ENCODE measurements at regions of chr19 and their contacts with region 1.

Region 1: GRCh38 chr19:35710784-35711723 is 6.7 kb downstream of the ZBTB32 start:
- DNase-seq: peak; percentile 87
- H3K4me3 Mint-ChIP-seq: peak overlapping the region; percentile 54
- H3K27ac Mint-ChIP-seq: peak overlapping the region; percentile 99
- H3K4me1 Mint-ChIP-seq: peaks cover 49% of the 10 kb centered on the region
- H3K27me3 Mint-ChIP-seq: no peaks in the 10 kb centered on the region

Region 2: GRCh38 chr19:35436477-35437405 is 274.3 kb before region 1 on chr19:
- CTCF ChIA-PET with region 1: no interaction called
- POLR2A ChIA-PET with region 1: no interaction called
- intact Hi-C with region 1: no loop called
- DNase-seq: peak; percentile 51
- H3K4me3 Mint-ChIP-seq: peak overlapping the region; percentile 1
- H3K27ac Mint-ChIP-seq: no peak overlapping the region
- H3K4me1 Mint-ChIP-seq: peaks cover 18% of the 10 kb centered on the region
- H3K27me3 Mint-ChIP-seq: peaks cover 13% of the 10 kb centered on the region

Region 3: DNA sequence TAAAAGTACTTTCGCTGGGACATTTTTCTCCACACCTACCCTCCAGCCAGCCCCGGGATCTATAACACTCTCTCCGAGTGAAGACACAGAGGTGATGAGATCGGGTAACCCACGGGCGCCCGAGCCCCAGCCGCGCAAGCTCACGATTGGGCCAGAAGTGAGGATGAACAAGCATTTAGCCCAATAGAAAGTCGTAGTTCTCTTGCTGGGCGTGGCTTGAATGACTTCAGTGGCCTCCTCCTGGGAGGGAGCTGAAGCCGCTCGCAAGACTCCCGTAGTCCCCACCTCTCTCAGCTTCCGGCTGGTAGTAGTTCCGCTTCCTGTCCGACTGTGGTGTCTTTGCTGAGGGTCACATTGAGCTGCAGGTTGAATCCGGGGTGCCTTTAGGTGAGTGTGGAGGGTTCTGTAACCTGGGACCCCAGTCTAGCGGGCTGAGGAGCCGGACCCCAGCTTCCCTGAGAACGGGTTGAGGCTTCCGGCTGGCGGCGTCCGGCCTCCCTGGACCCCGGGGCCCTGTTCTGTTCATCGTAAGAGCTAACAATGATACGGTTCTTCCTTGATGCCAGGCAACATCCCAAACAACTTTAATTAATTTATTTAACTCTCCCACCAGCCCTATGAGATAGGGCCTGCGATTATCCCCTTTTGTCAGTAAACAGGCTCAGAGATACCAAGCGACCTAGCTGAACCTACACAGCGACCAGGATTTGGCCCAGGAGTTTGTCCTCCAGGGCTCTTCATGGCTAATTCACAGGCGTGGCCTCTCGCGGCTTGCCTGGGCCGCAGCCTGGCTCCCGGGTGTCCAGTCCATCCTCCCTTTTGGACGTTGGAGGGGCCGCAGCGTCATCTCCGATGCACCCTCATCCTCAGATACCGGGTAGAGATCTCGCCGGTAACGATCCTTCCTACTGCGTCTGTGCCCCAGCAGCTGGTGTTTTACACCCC is 62.8 kb before region 1 on chr19 and contains the start of gene COX6B1:
- CTCF ChIA-PET with region 1: interaction called, 5 read pairs
- POLR2A ChIA-PET with region 1: interaction called, 3 read pairs
- intact Hi-C with region 1: loop called (anchors 1 kb)
- DNase-seq: peak; percentile 96
- H3K4me3 Mint-ChIP-seq: peak within 1 kb of the TSS; percentile 97
- H3K27ac Mint-ChIP-seq: peak within 1 kb of the TSS; percentile 85
- H3K4me1 Mint-ChIP-seq: peaks cover 37% of the 10 kb centered on the region
- H3K27me3 Mint-ChIP-seq: no peaks in the 10 kb centered on the region
- total RNA-seq, gene COX6B1: 444 to 453 TPM

Region 4: GRCh38 chr19:35740423-35741202 is 29.6 kb after region 1 on chr19:
- CTCF ChIA-PET with region 1: interaction called, 12 read pairs
- POLR2A ChIA-PET with region 1: interaction called, 45 read pairs
- intact Hi-C with region 1: loop called (anchors 2 kb)
- DNase-seq: peak; percentile 98
- H3K4me3 Mint-ChIP-seq: peak overlapping the region; percentile 89
- H3K27ac Mint-ChIP-seq: peak overlapping the region; percentile 90
- H3K4me1 Mint-ChIP-seq: peaks cover 31% of the 10 kb centered on the region
- H3K27me3 Mint-ChIP-seq: no peaks in the 10 kb centered on the region

Region 5: DNA sequence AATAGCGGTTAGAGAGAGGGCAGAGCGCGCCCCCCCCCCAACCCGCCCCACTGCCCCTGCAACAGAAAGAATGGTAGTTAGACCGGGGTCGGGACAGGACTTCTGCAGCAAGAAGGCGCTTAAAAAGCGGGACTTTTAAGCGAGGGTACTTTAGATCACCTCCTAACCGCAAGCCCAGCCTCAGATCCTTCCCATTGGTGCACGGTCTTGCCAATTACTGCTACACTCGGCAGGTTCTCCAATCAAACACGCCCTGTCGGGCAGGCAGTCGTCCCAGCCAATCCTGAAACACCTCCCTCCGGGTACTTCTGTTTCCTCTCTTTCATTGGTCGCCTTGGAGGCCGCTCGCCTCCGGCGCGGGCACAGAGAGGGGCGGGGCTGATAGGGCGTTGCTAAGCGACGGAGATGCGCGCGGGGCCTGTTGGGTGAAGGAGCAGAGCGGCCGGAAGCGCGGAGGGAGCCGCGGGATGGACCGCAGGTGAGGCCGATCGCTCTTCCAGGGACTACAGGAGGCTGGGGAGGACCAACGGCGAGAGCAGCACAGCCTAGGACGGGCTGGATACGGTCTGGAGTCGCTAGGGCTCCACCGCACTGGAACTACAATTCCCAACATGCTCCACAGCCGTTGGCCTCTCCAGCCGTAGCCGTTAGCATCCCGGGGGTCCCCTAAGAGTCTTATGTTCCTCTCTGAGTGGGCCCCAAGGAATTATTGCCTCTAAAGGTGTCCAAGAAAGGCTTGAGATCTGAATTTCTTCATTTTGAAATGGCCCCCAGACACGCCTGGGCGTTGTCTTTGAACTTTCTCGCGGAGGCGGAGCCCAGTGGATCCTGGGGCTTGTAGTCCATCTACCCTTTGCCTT is 46.9 kb after region 1 on chr19 and contains the start of gene PROSER3:
- CTCF ChIA-PET with region 1: no interaction called
- POLR2A ChIA-PET with region 1: no interaction called
- intact Hi-C with region 1: loop called (anchors 1 kb)
- DNase-seq: peak; percentile 99
- H3K4me3 Mint-ChIP-seq: peak within 1 kb of the TSS; percentile 88
- H3K27ac Mint-ChIP-seq: peak within 1 kb of the TSS; percentile 91
- H3K4me1 Mint-ChIP-seq: peaks cover 27% of the 10 kb centered on the region
- H3K27me3 Mint-ChIP-seq: no peaks in the 10 kb centered on the region
- total RNA-seq, gene PROSER3: 38.4 to 40.0 TPM

Region 6: GRCh38 chr19:35899547-35900214 is 188.6 kb after region 1 on chr19:
- CTCF ChIA-PET with region 1: no interaction called
- POLR2A ChIA-PET with region 1: interaction called, 5 read pairs
- intact Hi-C with region 1: loop called (anchors 1 kb)
- DNase-seq: peak; percentile 93
- H3K4me3 Mint-ChIP-seq: peak overlapping the region; percentile 92
- H3K27ac Mint-ChIP-seq: peak overlapping the region; percentile 97
- H3K4me1 Mint-ChIP-seq: peaks cover 59% of the 10 kb centered on the region
- H3K27me3 Mint-ChIP-seq: no peaks in the 10 kb centered on the region

Region 7: GRCh38 chr19:35963514-35963913 is 252.5 kb after region 1 on chr19:
- CTCF ChIA-PET with region 1: no interaction called
- POLR2A ChIA-PET with region 1: no interaction called
- intact Hi-C with region 1: no loop called
- DNase-seq: peak; percentile 63
- H3K4me3 Mint-ChIP-seq: no peak overlapping the region
- H3K27ac Mint-ChIP-seq: no peak overlapping the region
- H3K4me1 Mint-ChIP-seq: peaks cover 12% of the 10 kb centered on the region
- H3K27me3 Mint-ChIP-seq: peaks cover 3% of the 10 kb centered on the region